ENCODE measurements at regions of chr11 and their contacts with region 1.

Region 1: GRCh38 chr11:65329944-65330403 is 3.7 kb upstream of the DPF2 start:
- DNase-seq: no peak
- H3K4me3 ChIP-seq: no peak overlapping the region
- H3K27me3 ChIP-seq: no peaks in the 10 kb centered on the region
- CTCF ChIP-seq: peak; percentile 71

Region 2: GRCh38 chr11:64887757-64888405 is 442.1 kb before region 1 on chr11:
- CTCF ChIA-PET with region 1: no interaction called
- POLR2A ChIA-PET with region 1: no interaction called
- DNase-seq: no peak
- H3K4me3 ChIP-seq: no peak overlapping the region
- H3K27me3 ChIP-seq: no peaks in the 10 kb centered on the region
- CTCF ChIP-seq: peak; percentile 95

Region 3: GRCh38 chr11:65261591-65262380 is 68.2 kb before region 1 on chr11 and contains the start of gene POLA2:
- CTCF ChIA-PET with region 1: interaction called, 14 read pairs
- POLR2A ChIA-PET with region 1: no interaction called
- DNase-seq: peak; percentile 81
- H3K4me3 ChIP-seq: peak within 1 kb of the TSS; percentile 67
- H3K27me3 ChIP-seq: no peaks in the 10 kb centered on the region
- CTCF ChIP-seq: no peak
- polyA plus RNA-seq, gene POLA2: 11.8 and 14.5 TPM in 2 replicates

Region 4: GRCh38 chr11:65290448-65291165 is 39.4 kb before region 1 on chr11:
- CTCF ChIA-PET with region 1: interaction called, 20 read pairs
- POLR2A ChIA-PET with region 1: interaction called, 13 read pairs
- DNase-seq: peak; percentile 98
- H3K4me3 ChIP-seq: no peak overlapping the region
- H3K27me3 ChIP-seq: no peaks in the 10 kb centered on the region
- CTCF ChIP-seq: no peak

Region 5: DNA sequence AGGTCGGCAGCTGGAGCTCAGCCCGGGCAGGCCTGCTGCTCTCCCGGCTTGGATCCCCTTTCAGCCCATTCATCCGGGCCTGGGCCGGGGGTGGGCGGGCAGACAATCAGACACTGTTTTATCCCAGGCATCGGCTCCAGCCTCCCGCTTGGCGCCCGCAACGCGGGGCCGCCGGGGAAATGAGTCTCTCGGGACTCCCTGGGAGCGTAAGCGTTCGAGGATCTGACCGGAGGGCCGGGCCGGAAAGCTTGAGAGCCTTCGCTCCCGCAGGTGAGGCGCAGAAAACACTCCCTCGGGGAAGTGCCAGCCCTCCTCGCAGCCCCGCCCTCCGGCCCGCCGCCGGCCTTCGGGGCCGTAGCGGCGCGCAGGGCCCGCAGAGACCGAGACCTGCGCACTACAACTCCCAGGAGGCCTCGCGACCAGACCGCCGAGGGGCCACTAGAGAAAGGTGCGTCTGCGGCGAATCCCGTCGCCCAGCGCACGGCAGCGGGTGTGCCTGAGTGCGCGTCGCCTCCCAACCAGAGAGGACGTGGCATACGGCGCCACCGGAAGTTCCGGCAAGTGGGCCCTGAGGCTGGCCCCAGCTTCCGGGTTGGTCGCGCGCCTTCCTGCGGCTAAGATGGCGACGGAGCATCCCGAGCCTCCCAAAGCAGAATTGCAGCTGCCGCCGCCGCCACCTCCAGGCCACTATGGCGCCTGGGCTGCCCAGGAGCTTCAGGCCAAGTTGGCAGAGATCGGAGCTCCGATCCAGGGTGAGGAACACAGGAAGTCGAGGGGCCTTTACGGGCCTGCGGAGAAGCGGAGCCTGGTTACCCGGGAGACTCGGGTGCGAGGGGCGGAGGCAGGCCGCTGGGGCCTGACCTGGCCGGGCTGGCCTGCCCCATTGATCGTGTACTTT is 722.0 kb after region 1 on chr11 and contains the start of gene SF3B2:
- CTCF ChIA-PET with region 1: no interaction called
- POLR2A ChIA-PET with region 1: no interaction called
- DNase-seq: peak; percentile 92
- H3K4me3 ChIP-seq: peak within 1 kb of the TSS; percentile 88
- H3K27me3 ChIP-seq: no peaks in the 10 kb centered on the region
- CTCF ChIP-seq: no peak
- polyA plus RNA-seq, gene SF3B2: 70.3 and 82.7 TPM in 2 replicates